ENCODE measurements at regions of chr2 and their contacts with region 1.

Region 1: DNA sequence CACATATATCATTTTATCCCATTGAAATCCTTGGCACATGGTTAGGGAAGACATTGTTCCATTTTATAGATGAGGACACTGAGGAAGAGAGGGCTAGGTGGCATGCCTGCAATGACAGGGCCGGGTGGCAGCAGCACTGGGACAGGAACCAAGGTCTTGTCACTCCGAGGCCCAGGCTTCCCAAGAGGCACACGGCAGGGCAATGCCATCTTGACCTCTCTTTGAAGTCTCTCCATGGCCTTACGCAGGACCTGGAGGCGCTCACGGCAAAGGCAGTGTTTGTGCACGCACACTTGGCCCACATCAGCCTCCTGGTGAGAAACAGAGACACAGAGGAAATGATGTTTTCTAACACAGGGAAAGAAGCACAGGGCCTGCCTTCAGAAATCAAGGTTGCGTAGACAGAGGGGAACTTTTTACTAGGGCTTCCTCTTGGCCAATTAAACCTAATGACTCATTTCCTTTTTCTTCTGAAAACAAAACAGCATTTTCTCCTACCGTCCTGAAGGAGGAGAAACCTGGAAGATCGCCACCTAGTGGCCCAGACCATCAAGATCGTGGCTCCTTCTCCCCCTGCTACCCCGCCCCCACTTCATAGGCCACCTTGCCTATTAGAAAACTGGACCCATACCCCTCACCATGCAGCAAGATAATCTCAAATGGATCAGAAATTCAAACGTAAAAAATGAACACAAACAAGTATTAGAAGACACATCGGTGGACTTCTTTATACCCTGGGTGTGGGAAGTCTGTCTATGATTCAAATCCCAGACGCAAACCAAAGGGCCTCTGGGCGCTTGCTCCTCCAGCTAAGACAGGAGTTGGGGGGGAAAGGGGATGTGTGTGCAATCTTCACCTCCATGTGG is 74.6 kb upstream of the SP3 start:
- DNase-seq: no peak
- H3K4me3 ChIP-seq: no peak overlapping the region
- H3K27ac ChIP-seq: peak overlapping the region; percentile 83
- H3K4me1 ChIP-seq: peaks cover 24% of the 10 kb centered on the region
- H3K27me3 ChIP-seq: no peaks in the 10 kb centered on the region
- CTCF ChIP-seq: peak; percentile 65 to 94 (median 79)
- POLR2A ChIP-seq: no peak

Region 2: DNA sequence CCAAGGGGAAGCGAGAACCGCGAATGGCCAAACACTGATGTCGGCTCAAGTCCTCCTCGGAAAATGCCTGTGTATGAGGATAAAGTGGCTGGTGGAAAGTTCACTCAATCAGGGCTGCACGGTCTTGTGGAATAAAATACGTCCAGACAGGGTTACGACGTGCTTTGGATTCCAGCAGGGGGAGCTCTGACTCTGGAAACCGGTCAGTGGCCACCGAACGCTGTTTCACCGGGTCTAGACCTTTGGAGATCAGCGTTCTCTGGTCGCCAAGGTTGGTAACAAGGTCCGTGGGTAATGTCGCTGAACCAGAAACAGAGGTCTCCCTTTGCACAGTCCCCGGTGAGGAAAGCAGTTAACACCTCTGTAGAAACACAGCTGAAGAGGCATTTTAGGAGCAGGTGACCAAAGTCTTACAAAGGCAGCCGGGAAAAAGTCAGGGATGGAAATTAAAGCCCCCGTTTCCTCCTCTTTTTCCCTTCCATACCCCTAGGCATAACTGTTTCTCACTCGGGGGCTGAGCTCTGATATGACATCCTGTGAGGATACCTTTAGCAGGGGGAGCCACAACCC is 637.3 kb before region 1 on chr2:
- intact Hi-C with region 1: loop called (anchors 10 kb)
- DNase-seq: no peak
- H3K4me3 ChIP-seq: peak overlapping the region; percentile 22 to 37
- H3K27ac ChIP-seq: peak overlapping the region; percentile 36
- H3K4me1 ChIP-seq: peaks cover 17% of the 10 kb centered on the region
- H3K27me3 ChIP-seq: no peaks in the 10 kb centered on the region
- CTCF ChIP-seq: peak; percentile 68 to 88 (median 87)
- POLR2A ChIP-seq: no peak